AG04450 (cell line): ENCODE measurements at regions of chr11 and their contacts with region 1.

Region 1: DNA sequence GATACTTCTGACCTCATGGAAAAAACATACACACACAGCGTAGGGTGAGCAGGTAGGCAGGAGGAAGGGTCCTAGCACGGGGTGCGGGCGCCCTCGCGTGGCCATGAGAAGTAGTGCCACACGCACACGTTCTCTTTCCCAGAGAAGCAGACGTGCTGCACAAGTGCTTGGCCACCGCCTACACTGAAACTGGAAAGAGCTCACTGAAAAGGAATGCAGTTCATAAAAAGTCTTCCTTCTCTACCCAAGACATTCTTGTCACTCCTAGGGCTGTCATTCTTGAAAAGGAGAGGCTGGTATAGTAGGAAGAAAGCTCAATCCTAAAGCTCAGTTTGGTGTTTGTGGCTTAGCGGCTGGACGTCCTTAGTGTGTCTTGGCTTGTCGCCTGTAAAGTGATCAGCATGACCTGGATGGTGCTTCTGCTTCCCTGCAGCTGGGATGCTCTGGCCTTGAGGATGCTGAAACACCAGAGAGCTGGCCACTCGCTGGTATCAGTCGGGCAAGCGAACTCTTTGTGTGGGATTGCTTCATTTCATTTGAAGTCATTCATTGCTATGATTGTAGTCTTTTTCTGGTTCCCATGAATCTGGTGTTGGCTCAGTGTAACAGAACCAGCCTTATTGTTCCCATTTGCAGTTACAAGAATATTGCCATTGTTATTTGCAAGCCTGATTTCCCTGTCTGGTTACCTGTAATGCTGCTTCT is 303.8 kb downstream of the NTM start:
- DNase-seq: peak; percentile 74
- H3K4me3 ChIP-seq: no peak overlapping the region
- H3K27ac ChIP-seq: no peak overlapping the region
- H3K27me3 ChIP-seq: no peaks in the 10 kb centered on the region
- CTCF ChIP-seq: peak; percentile 99

Region 2: DNA sequence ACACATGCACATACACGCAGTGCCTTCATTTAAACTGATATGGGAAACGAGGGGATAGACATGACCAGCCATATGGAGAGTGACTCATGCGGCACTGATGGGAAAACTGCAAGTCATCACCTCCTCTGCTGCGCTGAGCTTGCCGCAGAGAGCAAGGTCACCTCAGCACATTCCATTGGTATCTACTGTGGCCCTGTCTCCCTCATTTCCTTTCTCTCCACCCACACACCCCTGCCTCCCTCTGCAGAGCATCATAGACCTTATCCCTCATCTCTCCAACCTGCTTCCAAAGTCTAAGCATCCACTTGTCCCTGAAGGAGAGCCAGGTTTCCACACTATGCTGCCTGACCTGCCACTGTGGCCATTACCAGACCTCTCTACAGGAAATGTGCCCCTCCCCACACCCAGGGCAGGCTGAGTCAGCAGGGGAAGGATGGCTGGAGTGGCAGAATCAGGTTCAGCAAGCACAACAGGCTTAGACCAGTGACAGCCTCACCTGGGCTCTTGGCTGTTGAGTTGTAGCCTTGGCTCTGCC is 641.0 kb before region 1 on chr11:
- CTCF ChIA-PET with region 1: interaction called, 66 read pairs
- POLR2A ChIA-PET with region 1: no interaction called
- DNase-seq: peak; percentile 88
- H3K4me3 ChIP-seq: no peak overlapping the region
- H3K27ac ChIP-seq: peak overlapping the region; percentile 82
- H3K27me3 ChIP-seq: no peaks in the 10 kb centered on the region
- CTCF ChIP-seq: no peak

Region 3: DNA sequence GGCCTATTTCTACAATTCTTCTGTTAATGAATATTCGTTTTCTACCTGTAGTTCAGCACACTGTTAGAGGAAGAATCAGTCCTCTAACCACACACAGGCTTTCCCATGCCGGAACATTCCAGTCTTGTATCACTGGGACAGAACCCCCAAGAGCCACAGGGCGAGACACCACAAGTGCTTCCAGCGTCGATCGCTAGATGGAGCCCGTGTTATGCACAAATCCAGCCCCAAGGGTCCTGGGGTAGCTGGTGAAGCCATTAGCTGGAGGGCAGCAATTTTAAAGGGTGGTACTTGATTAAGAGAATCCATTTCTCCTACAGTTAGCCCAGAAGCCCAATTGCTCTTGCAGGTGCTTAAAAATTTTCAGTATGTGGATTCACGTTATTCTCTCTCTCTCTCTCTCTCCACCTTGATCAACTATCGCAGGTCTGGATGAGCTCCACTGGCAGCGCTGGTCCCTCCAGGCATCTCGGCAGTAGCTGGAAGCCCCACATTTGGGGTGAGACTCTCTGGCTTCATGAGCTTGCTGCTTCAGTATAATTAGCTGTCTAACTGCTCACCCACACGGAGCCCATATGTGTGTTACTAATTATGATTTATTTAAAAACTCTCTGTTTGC is 609.7 kb before region 1 on chr11:
- CTCF ChIA-PET with region 1: interaction called, 126 read pairs
- POLR2A ChIA-PET with region 1: no interaction called
- DNase-seq: peak; percentile 55
- H3K4me3 ChIP-seq: no peak overlapping the region
- H3K27ac ChIP-seq: no peak overlapping the region
- H3K27me3 ChIP-seq: no peaks in the 10 kb centered on the region
- CTCF ChIP-seq: peak; percentile 98

Region 4: DNA sequence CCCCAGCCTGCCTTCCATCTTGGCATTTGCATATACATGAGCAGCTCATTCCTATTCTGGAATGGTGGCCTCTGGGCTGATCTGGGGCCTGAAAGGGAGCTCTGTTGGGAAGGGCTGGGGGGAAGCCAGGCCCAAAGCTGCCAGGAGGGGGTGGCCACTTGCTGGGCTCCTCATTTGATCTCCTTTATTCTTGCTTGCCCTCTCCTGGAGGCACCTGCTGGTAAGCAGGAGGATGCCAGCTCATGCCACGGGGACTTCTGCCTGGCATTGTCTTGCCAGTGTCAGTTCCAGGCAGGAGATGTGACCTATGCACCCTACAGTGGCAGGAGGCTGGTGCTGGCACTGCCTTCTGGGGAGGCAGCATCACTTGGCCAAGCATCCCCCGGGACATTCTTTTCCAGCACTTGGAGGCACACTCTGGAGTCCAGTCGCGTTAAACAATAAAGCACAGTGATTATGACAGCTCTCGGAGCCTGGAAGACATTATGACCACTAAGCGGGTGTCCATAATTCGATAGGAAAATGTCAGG is 175.5 kb before region 1 on chr11:
- CTCF ChIA-PET with region 1: no interaction called
- POLR2A ChIA-PET with region 1: no interaction called
- DNase-seq: no peak
- H3K4me3 ChIP-seq: no peak overlapping the region
- H3K27ac ChIP-seq: no peak overlapping the region
- H3K27me3 ChIP-seq: peaks cover 3% of the 10 kb centered on the region
- CTCF ChIP-seq: no peak

Region 5: GRCh38 chr11:131649856-131650255 is 24.3 kb before region 1 on chr11:
- CTCF ChIA-PET with region 1: interaction called, 15 read pairs
- POLR2A ChIA-PET with region 1: no interaction called
- DNase-seq: no peak
- H3K4me3 ChIP-seq: no peak overlapping the region
- H3K27ac ChIP-seq: no peak overlapping the region
- H3K27me3 ChIP-seq: peaks cover 4% of the 10 kb centered on the region
- CTCF ChIP-seq: no peak

Region 6: DNA sequence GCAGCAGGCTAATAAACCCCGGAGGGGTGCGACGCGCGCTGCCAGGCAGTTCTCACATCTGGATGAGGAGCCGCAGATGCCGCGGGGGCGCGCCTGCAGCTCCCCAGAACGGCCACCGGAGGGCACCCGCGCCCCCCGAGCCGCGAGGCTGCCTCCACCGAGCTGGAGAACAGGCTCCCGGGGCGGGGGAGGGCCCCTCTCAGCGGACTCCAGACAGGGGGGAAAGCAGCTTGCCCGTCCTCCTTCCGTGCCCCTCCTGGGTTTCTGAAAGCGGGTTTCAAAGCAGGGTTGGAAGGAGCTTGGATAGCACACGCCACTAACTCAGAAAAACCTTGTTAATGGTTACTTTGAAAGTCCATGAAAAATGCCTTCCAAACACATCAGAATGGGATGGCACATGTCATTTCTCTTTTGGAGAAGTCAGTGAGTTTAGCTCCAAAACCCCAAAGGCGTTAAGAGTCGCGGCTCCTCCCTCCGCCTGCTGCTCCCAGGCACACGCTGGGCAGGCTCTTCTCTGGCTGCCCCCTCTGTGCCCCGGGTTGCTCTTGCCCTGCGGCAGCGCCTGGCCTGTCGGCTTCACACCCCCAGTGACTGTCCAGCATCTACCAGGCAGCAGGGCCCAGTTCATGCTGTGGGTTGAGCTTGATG is 14.0 kb after region 1 on chr11:
- CTCF ChIA-PET with region 1: interaction called, 70 read pairs
- POLR2A ChIA-PET with region 1: no interaction called
- DNase-seq: no peak
- H3K4me3 ChIP-seq: peak overlapping the region; percentile 46
- H3K27ac ChIP-seq: no peak overlapping the region
- H3K27me3 ChIP-seq: peaks cover 11% of the 10 kb centered on the region
- CTCF ChIP-seq: peak; percentile 89